ENCODE measurements at regions of chr1 and their contacts with region 1.

Region 1: DNA sequence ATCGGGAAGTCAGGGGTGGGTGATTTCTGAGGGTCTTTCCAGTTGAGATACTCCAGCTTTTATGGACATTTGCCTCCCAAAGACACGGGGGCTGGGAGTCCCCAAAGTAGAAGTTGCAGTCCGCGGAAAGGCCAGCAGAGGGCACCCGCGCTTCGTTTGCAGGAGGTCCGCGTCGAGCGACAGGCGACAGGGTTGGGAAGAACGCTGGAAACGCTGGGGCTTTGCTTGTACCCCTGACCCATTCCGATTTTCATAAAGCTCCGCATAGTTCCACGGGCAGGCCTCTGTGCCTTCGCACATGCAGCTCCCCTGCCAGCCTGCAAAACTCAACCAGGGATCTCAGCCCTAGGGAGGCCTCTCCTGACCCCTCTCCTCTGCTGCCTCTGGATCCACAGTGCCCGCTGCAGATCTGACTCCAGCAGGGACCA is 44.2 kb upstream of the LAPTM5 start:
- DNase-seq: peak; percentile 64 to 77 (median 66)
- H3K4me3 ChIP-seq: no peak overlapping the region
- H3K4me3 Mint-ChIP-seq: peak overlapping the region in 2 of 8 donors; percentile 25 to 27
- H3K27ac ChIP-seq: no peak overlapping the region
- H3K27ac Mint-ChIP-seq: peak overlapping the region in 2 of 7 donors; percentile 36 to 80
- H3K4me1 ChIP-seq: peaks cover 5% of the 10 kb centered on the region
- H3K4me1 Mint-ChIP-seq: peaks cover 0 to 5% (median 4%) of the 10 kb centered on the region in 4 donors
- H3K27me3 ChIP-seq: peaks cover 3% of the 10 kb centered on the region
- H3K27me3 Mint-ChIP-seq: peaks cover 12 to 26% of the 10 kb centered on the region in 2 donors

Region 2: DNA sequence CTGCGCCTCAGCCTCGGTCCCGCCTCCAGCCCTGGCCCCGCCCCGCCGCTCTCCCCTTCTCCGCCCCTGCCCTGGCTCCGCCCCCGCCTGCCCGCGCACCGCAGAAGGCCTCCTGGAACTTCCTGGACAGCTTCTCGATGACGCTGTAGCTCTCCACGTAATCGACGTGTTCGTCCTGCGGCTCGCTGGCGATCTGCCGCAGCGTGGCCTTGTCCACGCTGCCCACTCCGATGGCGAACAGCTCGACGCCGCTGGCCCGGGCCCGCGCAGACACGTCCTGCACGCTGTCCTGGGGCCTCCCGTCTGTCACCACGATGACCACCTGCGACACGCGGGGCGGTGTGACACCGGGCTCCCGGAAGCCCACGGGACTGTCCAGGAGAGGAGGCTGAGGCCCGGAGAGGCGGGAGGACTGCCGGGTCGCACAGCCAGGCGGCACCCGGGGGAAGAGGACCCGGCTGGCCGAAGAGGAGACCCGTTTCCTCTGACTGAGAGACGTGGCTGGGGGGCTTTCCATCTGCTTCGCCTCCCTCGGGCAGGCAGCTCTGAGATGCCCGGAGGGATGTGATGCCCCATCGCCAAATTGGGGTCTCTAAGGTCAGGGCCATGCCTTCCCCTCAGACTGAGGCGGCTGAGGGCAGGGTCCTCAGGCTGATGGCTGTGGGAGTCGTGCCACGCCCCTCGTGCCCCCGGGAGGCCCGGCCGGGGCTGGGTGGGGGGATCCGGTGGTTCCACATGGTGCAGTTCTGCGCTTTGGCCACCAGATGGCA is 83.0 kb before region 1 on chr1:
- CTCF ChIA-PET with region 1: interaction called, 28 read pairs
- POLR2A ChIA-PET with region 1: interaction called, 3 read pairs
- intact Hi-C with region 1: no loop called
- DNase-seq: peak; percentile 79 to 97 (median 96)
- H3K4me3 ChIP-seq: peak overlapping the region; percentile 85 to 94
- H3K4me3 Mint-ChIP-seq: peak overlapping the region; percentile 79 to 94 (median 84)
- H3K27ac ChIP-seq: peak overlapping the region; percentile 100
- H3K27ac Mint-ChIP-seq: peak overlapping the region; percentile 91 to 99 (median 96)
- H3K4me1 ChIP-seq: peaks cover 36% of the 10 kb centered on the region
- H3K4me1 Mint-ChIP-seq: peaks cover 15 to 45% (median 29%) of the 10 kb centered on the region in 4 donors
- H3K27me3 ChIP-seq: no peaks in the 10 kb centered on the region
- H3K27me3 Mint-ChIP-seq: no peaks in the 10 kb centered on the region

Region 3: DNA sequence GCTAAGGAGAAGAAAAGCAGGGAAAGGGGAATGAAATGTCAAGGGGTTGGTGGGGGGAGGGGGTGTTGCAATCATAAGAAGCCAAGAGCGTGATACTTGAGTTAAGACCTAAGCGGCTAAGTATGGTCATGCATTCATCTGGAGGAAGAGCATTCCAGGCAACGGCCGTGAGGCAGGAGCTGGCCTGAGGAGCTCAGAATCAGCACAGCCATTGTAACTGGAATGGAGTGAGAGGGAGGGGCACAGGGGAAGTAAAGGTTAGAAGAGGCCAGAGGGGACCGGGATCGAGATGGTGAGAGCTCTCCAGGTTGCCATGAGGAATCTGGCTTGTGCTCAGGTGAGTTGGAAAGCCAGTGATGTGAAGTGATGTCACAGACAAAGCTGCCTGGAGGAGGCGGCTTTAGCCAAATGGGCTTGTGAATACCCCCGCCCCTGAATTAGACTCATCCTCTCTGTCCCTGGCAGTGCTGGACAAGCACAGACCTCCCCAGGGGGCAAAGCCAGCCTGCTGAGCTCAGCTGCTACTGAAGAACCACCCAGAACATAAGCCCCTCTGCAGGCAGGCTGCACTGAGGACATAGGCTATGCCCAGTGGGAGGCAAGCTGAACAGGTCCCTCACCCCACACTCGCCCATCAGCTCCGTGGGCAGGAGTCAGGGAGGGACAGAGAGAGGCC is 16.9 kb after region 1 on chr1:
- CTCF ChIA-PET with region 1: interaction called, 27 read pairs
- POLR2A ChIA-PET with region 1: no interaction called
- intact Hi-C with region 1: no loop called
- DNase-seq: no peak
- H3K4me3 ChIP-seq: no peak overlapping the region
- H3K4me3 Mint-ChIP-seq: no peak overlapping the region
- H3K27ac ChIP-seq: no peak overlapping the region
- H3K27ac Mint-ChIP-seq: no peak overlapping the region
- H3K4me1 ChIP-seq: peaks cover 7% of the 10 kb centered on the region
- H3K4me1 Mint-ChIP-seq: peaks cover 2 to 10% (median 4%) of the 10 kb centered on the region in 4 donors
- H3K27me3 ChIP-seq: peaks cover 23% of the 10 kb centered on the region
- H3K27me3 Mint-ChIP-seq: peaks cover 25 to 39% of the 10 kb centered on the region in 2 donors

Region 4: GRCh38 chr1:30856260-30856790 is 54.5 kb after region 1 on chr1:
- CTCF ChIA-PET with region 1: interaction called, 15 read pairs
- POLR2A ChIA-PET with region 1: no interaction called
- intact Hi-C with region 1: no loop called
- DNase-seq: no peak
- H3K4me3 ChIP-seq: no peak overlapping the region
- H3K4me3 Mint-ChIP-seq: no peak overlapping the region
- H3K27ac ChIP-seq: no peak overlapping the region
- H3K27ac Mint-ChIP-seq: no peak overlapping the region
- H3K4me1 ChIP-seq: peaks cover 6% of the 10 kb centered on the region
- H3K4me1 Mint-ChIP-seq: peaks cover 0 to 8% (median 3%) of the 10 kb centered on the region in 4 donors
- H3K27me3 ChIP-seq: no peaks in the 10 kb centered on the region
- H3K27me3 Mint-ChIP-seq: peaks cover 3 to 11% of the 10 kb centered on the region in 2 donors

Region 5: GRCh38 chr1:30923597-30923996 is 121.8 kb after region 1 on chr1:
- CTCF ChIA-PET with region 1: interaction called, 90 read pairs
- POLR2A ChIA-PET with region 1: no interaction called
- intact Hi-C with region 1: no loop called
- DNase-seq: no peak
- H3K4me3 ChIP-seq: no peak overlapping the region
- H3K4me3 Mint-ChIP-seq: no peak overlapping the region
- H3K27ac ChIP-seq: no peak overlapping the region
- H3K27ac Mint-ChIP-seq: no peak overlapping the region
- H3K4me1 ChIP-seq: no peaks in the 10 kb centered on the region
- H3K4me1 Mint-ChIP-seq: no peaks in the 10 kb centered on the region
- H3K27me3 ChIP-seq: no peaks in the 10 kb centered on the region
- H3K27me3 Mint-ChIP-seq: peaks cover 2 to 4% of the 10 kb centered on the region in 2 donors

Region 6: DNA sequence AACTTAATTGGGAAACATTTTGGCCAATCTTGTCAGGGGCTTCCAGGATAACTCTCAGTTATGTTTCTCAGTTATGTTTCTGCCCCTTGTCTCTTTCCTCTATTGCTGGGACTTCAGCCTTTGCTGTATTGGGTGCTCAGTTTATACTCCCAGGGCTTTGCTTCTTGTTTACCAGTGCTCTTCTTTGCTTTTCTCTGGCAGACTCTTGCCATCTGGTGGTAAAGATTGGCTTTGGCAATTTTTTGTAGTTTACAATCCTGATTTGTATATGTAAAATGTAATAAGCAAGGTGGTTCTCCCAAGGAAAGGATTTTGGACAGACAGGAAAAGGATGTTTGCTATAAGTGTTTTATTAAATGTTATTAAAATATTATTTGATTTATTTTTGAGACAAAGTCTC is 533.2 kb after region 1 on chr1:
- CTCF ChIA-PET with region 1: no interaction called
- POLR2A ChIA-PET with region 1: no interaction called
- intact Hi-C with region 1: loop called (anchors 5 kb)
- DNase-seq: peak in 4 of 5 donors; percentile 3 to 20 (median 7)
- H3K4me3 ChIP-seq: no peak overlapping the region
- H3K4me3 Mint-ChIP-seq: no peak overlapping the region
- H3K27ac ChIP-seq: no peak overlapping the region
- H3K27ac Mint-ChIP-seq: no peak overlapping the region
- H3K4me1 ChIP-seq: no peaks in the 10 kb centered on the region
- H3K4me1 Mint-ChIP-seq: peaks cover 0 to 4% (median 2%) of the 10 kb centered on the region in 4 donors
- H3K27me3 ChIP-seq: no peaks in the 10 kb centered on the region
- H3K27me3 Mint-ChIP-seq: no peaks in the 10 kb centered on the region

Measured in CD4-positive, alpha-beta memory T cell (primary cell).